Activated CD8-positive, alpha-beta T cell treated with anti-CD3 and anti-CD28 coated beads, Interleukin-2, amount 10 ng/mL, durations not matched to agents 7 days and 5 days (primary cell): ENCODE measurements at regions of chr17 and their contacts with region 1.

Region 1: GRCh38 chr17:58200017-58200633 is 7.6 kb downstream of the EPX start:
- DNase-seq: peak; percentile 68
- ATAC-seq: peak; percentile 92
- H3K4me3 Mint-ChIP-seq: no peak overlapping the region
- H3K27ac Mint-ChIP-seq: no peak overlapping the region
- H3K4me1 Mint-ChIP-seq: no peaks in the 10 kb centered on the region
- H3K27me3 Mint-ChIP-seq: peaks cover 4% of the 10 kb centered on the region

Region 2: DNA sequence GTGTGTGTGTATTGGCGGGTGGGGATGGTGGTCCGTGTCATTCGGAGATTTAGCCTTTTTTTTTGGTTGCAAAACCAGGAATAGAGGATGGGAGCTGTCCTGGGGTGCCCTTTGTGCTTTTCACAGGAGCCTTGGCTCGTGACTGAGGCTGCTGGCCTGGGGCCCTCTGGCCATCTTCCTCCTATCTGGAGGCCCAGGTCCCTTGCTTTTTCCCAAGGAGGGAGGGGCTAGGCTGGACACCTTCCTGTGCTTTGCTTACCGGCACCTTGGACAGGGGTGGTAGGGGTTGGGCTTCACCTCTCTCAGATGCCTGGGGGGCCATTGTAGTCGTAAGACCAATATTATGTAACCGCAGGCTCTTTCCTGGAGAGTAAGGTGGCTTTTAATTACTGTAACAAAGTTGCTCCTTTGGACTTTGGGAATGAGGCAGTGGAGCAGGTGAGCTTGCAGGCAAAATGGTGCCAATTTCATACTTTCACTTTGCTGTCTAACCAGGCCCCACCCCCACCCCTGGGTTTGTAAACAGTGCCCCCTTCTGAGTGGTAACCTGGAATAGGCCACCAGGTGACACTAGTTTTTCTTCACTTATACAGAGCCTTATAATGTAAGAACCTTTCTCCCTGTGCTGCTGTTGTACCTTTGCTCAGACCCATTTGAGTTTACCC is 115.7 kb before region 1 on chr17:
- CTCF ChIA-PET with region 1: no interaction called
- POLR2A ChIA-PET with region 1: no interaction called
- DNase-seq: peak; percentile 74
- ATAC-seq: peak; percentile 31
- H3K4me3 Mint-ChIP-seq: peak overlapping the region; percentile 85
- H3K27ac Mint-ChIP-seq: peak overlapping the region; percentile 81
- H3K4me1 Mint-ChIP-seq: peaks cover 50% of the 10 kb centered on the region
- H3K27me3 Mint-ChIP-seq: peaks cover 14% of the 10 kb centered on the region

Region 3: GRCh38 chr17:58136669-58137283 is 63.3 kb before region 1 on chr17:
- CTCF ChIA-PET with region 1: no interaction called
- POLR2A ChIA-PET with region 1: no interaction called
- DNase-seq: no peak
- ATAC-seq: no peak
- H3K4me3 Mint-ChIP-seq: no peak overlapping the region
- H3K27ac Mint-ChIP-seq: no peak overlapping the region
- H3K4me1 Mint-ChIP-seq: peaks cover 3% of the 10 kb centered on the region
- H3K27me3 Mint-ChIP-seq: peaks cover 23% of the 10 kb centered on the region

Region 4: GRCh38 chr17:58219001-58219788 is 19.1 kb after region 1 on chr17 and contains the start of gene MKS1:
- CTCF ChIA-PET with region 1: interaction called, 30 read pairs
- POLR2A ChIA-PET with region 1: interaction called, 4 read pairs
- DNase-seq: peak; percentile 97
- ATAC-seq: peak; percentile 98
- H3K4me3 Mint-ChIP-seq: peak within 1 kb of the TSS; percentile 87
- H3K27ac Mint-ChIP-seq: peak within 1 kb of the TSS; percentile 97
- H3K4me1 Mint-ChIP-seq: peaks cover 24% of the 10 kb centered on the region
- H3K27me3 Mint-ChIP-seq: peaks cover 11% of the 10 kb centered on the region
- total RNA-seq, gene MKS1: 16.1 to 17.6 TPM

Region 5: DNA sequence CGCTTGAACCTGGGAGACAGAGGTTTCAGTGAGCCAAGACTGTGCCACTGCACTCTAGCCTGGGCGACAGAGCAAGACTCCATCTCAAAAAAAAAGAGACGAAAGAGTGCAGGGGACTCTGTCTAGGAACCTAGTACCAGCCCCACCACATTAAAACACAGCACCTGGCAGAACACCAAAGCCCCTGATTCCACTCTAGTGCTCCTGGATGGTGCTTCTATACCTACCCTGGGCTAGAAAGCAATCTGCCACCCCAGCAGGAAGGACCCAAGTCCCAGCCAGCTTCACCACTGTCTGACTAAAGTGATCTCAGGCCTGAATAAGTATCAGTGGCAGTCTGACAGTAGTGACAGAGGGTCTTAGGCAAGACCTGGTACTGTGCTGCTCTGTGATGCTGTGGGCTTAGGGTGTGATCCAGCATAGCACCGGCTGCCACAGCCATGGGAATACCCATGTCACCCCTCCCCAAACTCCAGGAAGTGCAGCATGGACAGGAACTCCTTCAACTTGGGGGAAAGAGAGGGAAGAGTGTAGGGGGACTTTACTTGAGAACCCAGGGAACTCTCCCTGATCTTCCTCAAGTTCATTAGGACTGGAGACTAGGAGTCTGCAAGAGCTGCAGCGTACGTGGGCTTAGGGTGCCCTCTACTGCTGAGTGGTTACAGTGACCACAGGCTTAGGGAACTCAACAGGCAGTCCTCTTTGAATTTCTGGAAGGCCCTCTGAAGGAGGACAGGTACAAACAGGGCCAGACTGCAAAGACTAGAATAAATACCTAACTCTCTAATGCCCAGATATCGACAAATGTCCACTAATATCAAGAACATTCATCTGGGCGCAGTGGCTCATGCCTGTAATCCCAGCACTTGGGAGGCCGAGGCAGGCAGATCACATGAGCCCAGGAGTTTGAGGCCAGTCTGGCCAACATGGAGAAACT is 247.2 kb after region 1 on chr17:
- CTCF ChIA-PET with region 1: interaction called, 17 read pairs
- POLR2A ChIA-PET with region 1: no interaction called
- DNase-seq: peak; percentile 84
- ATAC-seq: peak; percentile 95
- H3K4me3 Mint-ChIP-seq: no peak overlapping the region
- H3K27ac Mint-ChIP-seq: no peak overlapping the region
- H3K4me1 Mint-ChIP-seq: peaks cover 4% of the 10 kb centered on the region
- H3K27me3 Mint-ChIP-seq: no peaks in the 10 kb centered on the region